BJ (cell line): ENCODE measurements at regions of chr10 and their contacts with region 1.

Region 1: DNA sequence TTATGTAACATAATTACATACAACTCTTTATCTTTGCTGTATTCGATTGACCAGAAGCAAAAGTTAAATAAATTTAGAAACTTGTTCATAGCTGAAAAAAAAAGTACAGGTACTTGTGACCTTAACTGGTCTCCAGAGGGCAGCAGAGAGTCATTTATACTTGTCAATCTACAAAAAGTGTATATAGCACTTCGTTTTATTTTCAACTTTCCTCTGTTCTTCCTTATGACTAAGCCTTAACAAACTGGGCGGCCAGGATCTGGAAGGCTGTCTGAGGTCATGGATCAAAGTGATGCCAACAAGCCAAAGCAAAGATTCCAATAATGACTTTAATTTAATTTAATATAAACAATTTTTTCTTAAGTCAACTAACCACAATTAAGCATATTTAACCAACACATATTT is 29.8 kb downstream of the C10orf67 start:
- DNase-seq: peak; percentile 20
- H3K4me3 ChIP-seq: no peak overlapping the region
- H3K27me3 ChIP-seq: no peaks in the 10 kb centered on the region
- CTCF ChIP-seq: peak; percentile 62

Region 2: DNA sequence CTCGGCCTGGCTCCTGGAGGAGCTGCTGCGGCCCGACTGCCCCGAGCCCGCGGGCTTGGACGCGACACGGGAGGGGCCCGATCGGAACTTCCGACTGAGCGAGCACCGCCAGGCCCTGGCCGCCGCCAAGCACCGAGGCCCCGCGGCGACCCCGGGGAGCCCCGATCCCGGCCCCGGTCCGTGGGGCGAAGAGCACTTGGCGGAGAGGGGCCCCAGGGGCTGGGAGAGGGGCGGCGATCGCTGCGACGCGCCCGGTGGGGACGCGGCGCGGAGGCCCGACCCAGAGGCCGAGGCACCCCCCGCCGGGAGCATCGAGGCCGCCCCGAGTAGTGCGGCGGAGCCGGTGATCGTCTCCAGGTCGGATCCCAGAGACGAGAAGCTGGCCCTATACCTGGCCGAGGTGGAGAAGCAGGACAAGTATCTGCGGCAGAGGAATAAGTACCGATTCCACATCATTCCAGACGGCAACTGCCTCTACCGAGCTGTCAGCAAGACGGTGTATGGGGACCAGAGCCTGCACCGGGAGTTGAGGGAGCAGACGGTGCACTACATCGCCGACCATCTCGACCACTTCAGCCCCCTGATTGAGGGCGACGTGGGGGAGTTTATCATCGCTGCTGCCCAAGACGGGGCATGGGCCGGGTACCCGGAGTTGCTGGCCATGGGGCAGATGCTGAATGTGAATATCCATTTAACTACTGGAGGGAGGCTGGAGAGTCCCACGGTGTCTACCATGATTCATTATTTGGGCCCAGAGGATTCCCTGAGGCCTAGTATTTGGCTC is 125.3 kb after region 1 on chr10:
- CTCF ChIA-PET with region 1: interaction called, 13 read pairs
- POLR2A ChIA-PET with region 1: no interaction called
- DNase-seq: no peak
- H3K4me3 ChIP-seq: peak overlapping the region; percentile 77
- H3K27me3 ChIP-seq: no peaks in the 10 kb centered on the region
- CTCF ChIP-seq: no peak

Region 3: DNA sequence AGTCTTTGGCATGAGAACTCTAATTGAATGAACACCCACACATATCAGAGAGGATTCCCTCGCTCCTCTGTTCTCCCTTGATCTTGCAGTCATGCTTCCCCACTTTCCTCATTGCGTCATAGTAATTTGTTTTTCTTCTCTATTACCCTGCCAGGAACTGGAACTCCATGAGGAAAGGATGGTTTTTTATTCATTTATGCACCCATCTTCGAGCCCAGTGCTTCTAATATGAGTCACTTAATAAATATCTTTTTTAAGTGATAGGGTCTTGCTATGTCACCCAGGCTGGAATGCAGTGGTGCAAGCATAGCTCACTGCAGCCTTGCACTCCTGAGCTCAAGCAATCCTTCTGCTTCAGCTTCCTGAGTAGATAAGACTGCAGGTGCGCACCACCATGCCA is 207.5 kb after region 1 on chr10:
- CTCF ChIA-PET with region 1: interaction called, 51 read pairs
- POLR2A ChIA-PET with region 1: no interaction called
- DNase-seq: no peak
- H3K4me3 ChIP-seq: no peak overlapping the region
- H3K27me3 ChIP-seq: no peaks in the 10 kb centered on the region
- CTCF ChIP-seq: no peak

Region 4: DNA sequence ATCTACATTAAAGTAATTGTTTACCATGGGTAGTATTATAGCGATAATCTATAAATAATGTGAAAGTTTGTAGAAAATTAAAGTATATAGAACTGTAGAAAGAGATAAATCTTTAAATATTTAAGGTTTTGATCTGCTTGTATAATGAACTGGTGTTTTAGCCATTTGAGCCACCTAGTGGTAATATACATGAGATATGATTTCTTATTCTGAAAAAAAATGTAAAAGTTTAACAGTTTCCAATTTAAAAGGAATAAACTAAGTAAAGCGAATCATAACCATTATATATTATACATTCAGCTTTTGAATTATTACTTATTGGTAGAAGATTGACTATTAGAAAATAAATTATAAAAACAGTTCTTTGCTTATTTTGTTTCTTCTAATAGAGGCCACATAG is 215.2 kb after region 1 on chr10:
- CTCF ChIA-PET with region 1: interaction called, 51 read pairs
- POLR2A ChIA-PET with region 1: no interaction called
- DNase-seq: no peak
- H3K4me3 ChIP-seq: no peak overlapping the region
- H3K27me3 ChIP-seq: no peaks in the 10 kb centered on the region
- CTCF ChIP-seq: peak; percentile 22; the same call in 1 of the 2 replicates